ENCODE measurements at regions of chr2 and their contacts with region 1.

Region 1: DNA sequence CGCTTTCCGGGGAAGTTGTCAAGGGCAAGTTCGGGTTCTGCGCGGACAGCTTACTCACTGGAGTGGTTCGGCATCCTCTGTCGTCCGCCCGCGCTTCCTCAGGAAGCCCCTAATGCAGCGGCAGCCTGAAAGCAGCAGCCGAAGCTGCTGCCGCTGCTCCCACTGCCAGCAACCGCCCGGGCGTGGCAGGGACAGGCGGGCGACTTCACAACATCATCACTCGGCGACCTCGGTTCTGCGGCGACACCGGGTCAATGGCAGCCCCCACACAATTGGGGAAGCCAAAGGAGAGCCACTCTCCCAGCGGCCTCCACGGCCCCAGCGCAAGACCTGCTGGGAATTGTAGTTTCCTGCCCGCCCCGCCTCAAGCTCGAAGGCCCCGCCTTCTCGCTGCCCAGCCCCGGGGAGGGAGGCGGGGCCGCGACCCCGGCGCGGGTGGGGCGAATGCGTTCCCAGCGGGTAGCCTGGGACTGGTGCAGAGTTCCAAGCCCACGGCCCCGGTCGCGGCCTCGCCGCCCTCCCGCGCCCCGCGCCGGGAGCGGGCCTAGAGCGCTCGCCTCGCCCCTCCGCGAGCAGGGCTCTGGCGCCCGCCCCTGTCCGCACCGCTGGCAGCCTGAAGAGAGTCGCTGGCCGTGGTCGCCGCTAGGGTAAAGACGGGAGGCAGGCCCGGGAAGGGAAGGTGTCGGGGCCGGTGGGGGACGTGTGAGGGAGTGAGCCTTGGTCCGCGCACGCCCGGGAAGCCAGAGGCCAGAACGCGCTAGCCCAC is at the starts of genes STRADB and TRAK2:
- DNase-seq: peak; percentile 86 to 95
- H3K4me3 ChIP-seq: peak within 1 kb of the TSS; percentile 99
- H3K27ac ChIP-seq: no peak within 1 kb of the TSS; the same call in 1 of the 2 replicates
- H3K4me1 ChIP-seq: peaks cover 34% of the 10 kb centered on the region
- H3K27me3 ChIP-seq: no peaks in the 10 kb centered on the region
- CTCF ChIP-seq: no peak
- total RNA-seq, gene STRADB: 24.0 and 32.1 TPM in 2 replicates
- total RNA-seq, gene TRAK2: 18.8 and 33.2 TPM in 2 replicates

Region 2: DNA sequence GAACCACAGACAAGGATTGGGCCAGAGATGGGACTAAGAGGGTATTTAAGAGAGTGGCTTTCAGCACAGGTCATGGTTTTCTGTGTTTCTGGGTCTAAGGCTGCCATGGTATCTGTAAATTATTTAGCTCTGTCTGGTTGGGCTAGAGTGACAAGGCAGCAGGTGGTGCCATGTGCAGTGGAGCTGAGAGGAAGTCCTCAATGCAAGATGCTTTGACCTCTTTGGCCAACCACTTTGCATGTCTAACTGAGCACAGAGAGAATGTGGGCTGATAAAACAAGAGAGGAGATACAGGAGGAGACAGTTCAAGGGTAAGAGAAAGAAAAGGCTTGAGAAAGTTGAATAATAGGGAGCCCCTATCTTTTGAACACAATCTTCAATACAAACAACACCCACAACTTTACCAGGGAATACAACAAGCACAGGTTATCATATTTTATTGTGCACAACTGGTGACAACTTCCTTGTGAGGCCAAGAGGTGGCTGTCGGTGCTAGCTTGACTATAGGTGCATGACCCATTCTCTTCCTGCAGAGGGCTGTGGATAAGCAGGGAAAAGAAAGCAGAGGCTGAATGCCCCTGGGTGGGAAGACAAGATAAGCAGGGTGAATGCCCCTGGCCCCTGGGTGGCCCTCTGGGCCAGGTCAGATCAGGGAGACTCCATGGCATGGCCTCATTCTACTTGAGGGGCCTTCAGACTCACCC is 106.7 kb before region 1 on chr2:
- CTCF ChIA-PET with region 1: no interaction called
- POLR2A ChIA-PET with region 1: no interaction called
- intact Hi-C with region 1: no loop called
- DNase-seq: no peak
- H3K4me3 ChIP-seq: no peak overlapping the region
- H3K27ac ChIP-seq: no peak overlapping the region
- H3K4me1 ChIP-seq: no peaks in the 10 kb centered on the region
- H3K27me3 ChIP-seq: no peaks in the 10 kb centered on the region
- CTCF ChIP-seq: no peak; the same call in 1 of the 2 replicates

Region 3: GRCh38 chr2:201383156-201383555 is 68.3 kb before region 1 on chr2:
- CTCF ChIA-PET with region 1: no interaction called
- POLR2A ChIA-PET with region 1: no interaction called
- intact Hi-C with region 1: no loop called
- DNase-seq: no peak
- H3K4me3 ChIP-seq: no peak overlapping the region
- H3K27ac ChIP-seq: no peak overlapping the region
- H3K4me1 ChIP-seq: peaks cover 9% of the 10 kb centered on the region; the same call in 1 of the 2 replicates
- H3K27me3 ChIP-seq: no peaks in the 10 kb centered on the region
- CTCF ChIP-seq: no peak

Region 4: DNA sequence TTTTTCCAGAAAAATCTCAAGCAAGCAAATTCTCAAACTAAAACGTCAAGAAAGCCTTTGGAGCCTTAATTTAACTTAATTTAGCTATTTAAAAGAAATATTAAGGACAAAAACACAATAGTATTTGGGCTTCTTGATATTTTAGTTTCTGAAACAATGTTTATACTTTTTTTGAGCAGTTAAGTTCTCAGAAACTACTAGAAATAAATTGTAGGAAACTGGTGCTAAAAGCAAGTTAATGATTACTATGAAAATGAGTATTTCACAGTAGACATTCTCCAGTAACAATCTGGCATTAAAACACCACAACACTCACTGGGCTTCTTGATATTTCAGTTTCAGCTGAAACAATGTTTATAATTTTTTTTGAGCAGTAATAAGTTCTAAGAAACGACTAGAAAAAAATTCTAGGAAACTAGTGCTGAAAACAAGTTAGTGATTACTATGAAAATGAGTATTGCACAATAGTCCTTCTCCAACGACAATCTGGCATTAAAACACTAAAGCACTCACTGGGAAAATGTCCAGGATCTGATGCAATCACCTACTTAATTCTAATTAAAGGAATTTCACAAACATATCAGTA is 45.3 kb before region 1 on chr2:
- CTCF ChIA-PET with region 1: interaction called, 10 read pairs
- POLR2A ChIA-PET with region 1: interaction called, 25 read pairs
- intact Hi-C with region 1: loop called (anchors 5 kb)
- DNase-seq: peak in 1 of 2 experiments; percentile 53
- H3K4me3 ChIP-seq: no peak overlapping the region
- H3K27ac ChIP-seq: peak overlapping the region; percentile 42
- H3K4me1 ChIP-seq: peaks cover 29% of the 10 kb centered on the region
- H3K27me3 ChIP-seq: no peaks in the 10 kb centered on the region
- CTCF ChIP-seq: no peak

Region 5: DNA sequence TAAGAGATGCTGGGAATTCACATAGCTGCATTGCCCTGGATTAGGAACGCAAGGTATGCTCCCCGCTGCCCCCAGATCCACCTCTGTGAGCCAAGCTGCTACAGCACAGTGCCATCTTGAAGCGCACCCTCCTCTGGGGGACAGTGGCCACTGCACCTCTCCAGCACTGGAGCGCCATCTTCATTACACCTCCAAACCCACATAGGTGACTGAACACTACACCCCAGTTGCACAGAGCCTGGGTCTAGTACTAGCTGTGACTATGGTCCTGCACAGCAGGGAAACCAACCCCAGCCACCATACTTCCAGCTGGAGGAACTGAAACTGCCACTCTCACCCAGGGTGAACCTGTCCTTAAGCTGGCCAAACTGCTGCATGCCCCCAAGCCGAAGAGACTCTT is 107.2 kb after region 1 on chr2:
- CTCF ChIA-PET with region 1: no interaction called
- POLR2A ChIA-PET with region 1: interaction called, 19 read pairs
- intact Hi-C with region 1: no loop called
- DNase-seq: no peak
- H3K4me3 ChIP-seq: no peak overlapping the region
- H3K27ac ChIP-seq: no peak overlapping the region
- H3K4me1 ChIP-seq: no peaks in the 10 kb centered on the region
- H3K27me3 ChIP-seq: no peaks in the 10 kb centered on the region
- CTCF ChIP-seq: no peak

Region 6: DNA sequence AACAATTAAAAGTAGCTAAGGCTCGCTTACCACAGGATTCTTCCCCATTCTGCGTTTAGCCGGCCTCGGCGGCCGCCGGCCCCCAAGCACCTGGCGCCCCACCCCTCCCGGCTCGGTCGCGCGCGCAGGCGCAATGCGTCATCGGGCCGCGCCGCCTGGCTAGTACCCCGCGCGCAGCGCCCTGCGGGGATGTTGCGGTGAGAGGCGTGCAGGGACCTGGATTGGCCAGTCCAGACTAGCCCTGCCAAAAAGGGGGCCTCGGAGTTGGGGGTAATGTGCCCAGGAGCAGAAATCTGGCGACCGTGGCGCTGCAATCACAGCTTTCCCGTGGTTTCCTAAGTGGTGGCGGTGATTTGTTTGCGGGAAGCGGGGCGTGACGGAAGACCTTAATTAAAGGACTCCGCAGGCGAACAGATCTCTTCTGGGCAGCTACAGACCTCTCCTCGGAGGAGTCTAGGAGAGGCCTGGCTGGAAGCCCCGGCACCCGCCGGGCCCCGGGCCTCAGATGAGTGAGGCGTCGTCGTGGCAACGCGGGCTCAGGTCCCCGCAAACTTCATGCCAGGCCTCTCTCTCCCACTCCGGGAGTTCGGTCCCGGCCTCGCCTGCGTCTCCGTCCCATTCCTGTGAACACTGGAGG is 191.2 kb after region 1 on chr2:
- CTCF ChIA-PET with region 1: no interaction called
- POLR2A ChIA-PET with region 1: no interaction called
- intact Hi-C with region 1: loop called (anchors 10 kb)
- DNase-seq: peak; percentile 46 to 87
- H3K4me3 ChIP-seq: peak overlapping the region; percentile 80
- H3K27ac ChIP-seq: peak overlapping the region; percentile 73
- H3K4me1 ChIP-seq: peaks cover 11% of the 10 kb centered on the region; the same call in 1 of the 2 replicates
- H3K27me3 ChIP-seq: no peaks in the 10 kb centered on the region
- CTCF ChIP-seq: no peak

Region 7: DNA sequence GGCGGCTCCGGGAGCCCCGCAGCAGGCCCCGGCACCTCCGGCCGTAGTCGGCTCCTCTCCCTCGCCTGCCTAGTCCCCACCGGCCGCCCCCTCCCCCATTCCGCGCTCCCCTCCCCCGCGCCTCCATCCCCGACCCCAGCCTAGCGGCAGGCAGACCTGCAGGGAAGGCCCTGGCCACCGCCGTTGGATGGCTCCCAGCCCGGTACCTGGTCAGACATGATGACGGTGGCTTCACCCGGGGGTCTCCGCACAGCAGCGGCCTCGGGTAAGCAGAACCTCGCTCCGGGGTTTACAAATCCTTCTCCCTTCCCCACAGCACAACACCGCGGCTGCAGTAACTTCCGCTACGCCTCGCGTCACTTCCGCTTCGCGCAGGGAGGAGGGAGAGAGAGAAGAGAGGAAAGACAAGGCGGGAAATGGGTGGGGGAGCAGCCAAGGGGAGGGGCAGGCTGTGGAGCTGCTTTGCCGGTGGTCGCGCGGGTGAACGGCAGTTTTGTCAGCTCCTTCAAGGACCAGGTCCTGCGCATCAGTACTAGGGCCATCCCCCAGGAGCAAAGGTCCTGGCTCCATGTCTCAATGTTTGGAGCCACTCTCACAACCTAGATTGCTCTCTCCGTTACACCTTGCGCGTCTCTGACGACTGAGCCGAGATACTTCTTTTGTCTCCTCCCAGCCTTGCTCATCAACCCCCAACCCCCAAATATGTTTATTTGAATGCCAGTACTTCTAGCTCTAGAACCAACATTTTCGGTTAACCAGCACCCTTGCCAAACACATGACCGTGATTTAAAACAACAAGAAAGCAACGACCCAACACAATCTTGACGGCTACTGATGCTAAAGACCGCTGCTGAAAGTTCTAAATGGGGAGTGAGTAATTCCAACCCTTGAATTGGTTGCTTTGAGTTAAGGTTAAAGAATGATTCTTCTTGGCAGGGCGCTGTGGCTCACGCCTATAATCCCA is 787.0 kb after region 1 on chr2 and contains the start of gene SUMO1:
- CTCF ChIA-PET with region 1: no interaction called
- POLR2A ChIA-PET with region 1: interaction called, 26 read pairs
- intact Hi-C with region 1: no loop called
- DNase-seq: peak; percentile 67 to 71
- H3K4me3 ChIP-seq: peak within 1 kb of the TSS; percentile 87
- H3K27ac ChIP-seq: peak within 1 kb of the TSS; percentile 25; the same call in 1 of the 2 replicates
- H3K4me1 ChIP-seq: peaks cover 7% of the 10 kb centered on the region
- H3K27me3 ChIP-seq: no peaks in the 10 kb centered on the region
- CTCF ChIP-seq: no peak
- total RNA-seq, gene SUMO1: 66.3 and 100 TPM in 2 replicates